Activated CD4-positive, alpha-beta T cell treated with anti-CD3 and anti-CD28 coated beads for 36 hours (primary cell): ENCODE measurements at regions of chr5 and their contacts with region 1.

Region 1: DNA sequence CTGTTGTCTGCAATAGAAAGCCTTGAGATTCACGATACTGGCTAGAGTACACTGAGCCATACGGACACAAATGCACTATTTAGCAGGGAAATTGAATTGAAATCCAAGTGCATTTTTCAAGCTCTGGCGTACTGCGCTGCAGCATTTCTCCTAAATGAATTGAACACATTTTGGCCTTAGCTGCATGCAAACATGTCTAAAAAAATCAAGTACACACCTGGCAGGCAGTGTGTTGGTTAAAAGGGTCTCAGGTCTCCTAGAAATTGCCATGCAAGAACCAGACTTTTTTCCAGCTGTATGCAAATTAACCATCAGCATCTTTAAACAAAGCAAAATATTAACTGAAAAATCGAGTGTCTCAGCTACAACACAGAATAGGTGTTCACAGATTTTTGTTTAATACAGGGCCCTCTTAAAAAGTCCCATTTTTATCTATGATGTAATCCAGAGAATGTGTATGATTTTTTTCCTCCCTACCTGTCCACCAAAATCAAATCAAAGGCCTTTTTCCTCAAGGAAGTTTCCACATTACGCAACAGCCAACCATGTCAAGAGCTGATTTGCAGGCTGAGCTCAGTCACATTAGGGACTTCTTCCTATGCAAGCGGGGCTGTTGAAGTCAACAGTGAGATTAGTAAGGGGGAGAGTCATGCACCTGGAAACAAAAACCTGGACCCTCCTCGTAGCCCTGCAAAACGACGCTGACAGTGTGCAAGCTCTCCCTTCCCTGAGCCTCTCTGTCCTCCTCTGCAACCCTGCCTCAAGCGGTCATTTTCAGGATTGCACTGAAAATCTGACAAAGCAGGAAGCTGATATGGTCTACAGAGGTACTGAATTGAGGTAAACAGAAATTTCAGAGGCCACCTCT is 14.1 kb upstream of the SFXN1 start:
- DNase-seq: peak; percentile 84
- ATAC-seq: peak; percentile 98
- H3K4me3 Mint-ChIP-seq: no peak overlapping the region
- H3K27ac Mint-ChIP-seq: peak overlapping the region; percentile 34
- H3K4me1 Mint-ChIP-seq: peaks cover 12% of the 10 kb centered on the region
- H3K27me3 Mint-ChIP-seq: peaks cover 6% of the 10 kb centered on the region

Region 2: GRCh38 chr5:174951146-174951780 is 513.0 kb before region 1 on chr5:
- CTCF ChIA-PET with region 1: interaction called, 4 read pairs
- POLR2A ChIA-PET with region 1: no interaction called
- intact Hi-C with region 1: loop called in 1 of 2 experiments (anchors 5 kb)
- DNase-seq: peak; percentile 74
- ATAC-seq: peak; percentile 74
- H3K4me3 Mint-ChIP-seq: no peak overlapping the region
- H3K27ac Mint-ChIP-seq: no peak overlapping the region
- H3K4me1 Mint-ChIP-seq: no peaks in the 10 kb centered on the region
- H3K27me3 Mint-ChIP-seq: peaks cover 10% of the 10 kb centered on the region

Region 3: DNA sequence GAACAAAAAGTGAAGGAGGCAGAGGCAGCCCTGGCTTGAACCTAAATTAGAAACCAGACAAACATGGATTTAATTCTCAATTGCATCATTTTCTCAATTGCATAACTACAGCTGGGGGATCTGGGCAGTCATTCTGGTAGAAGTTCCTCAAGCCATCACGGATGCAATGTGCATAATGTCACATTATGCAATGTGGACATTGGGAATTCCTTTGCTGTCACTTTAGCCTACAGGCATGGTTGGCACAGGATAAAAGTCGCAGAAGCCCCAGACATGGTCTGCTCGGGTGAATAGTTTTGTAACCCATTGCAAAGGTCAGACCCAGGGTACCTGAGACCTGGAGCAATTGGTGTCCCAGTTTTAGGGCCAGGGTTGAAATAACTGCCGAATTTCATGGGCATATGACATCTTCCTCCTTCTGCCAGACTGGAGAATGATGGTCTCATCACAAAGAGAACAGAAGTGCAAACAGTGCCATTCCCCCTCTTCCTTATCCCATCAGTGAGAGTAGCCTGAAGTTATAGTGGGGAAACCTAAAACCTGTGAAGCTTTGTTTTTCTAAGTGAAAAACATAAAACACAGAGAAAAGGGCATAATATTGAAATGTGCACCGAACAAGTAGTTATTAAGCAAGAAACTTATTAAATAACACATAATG is 449.2 kb before region 1 on chr5:
- CTCF ChIA-PET with region 1: no interaction called
- POLR2A ChIA-PET with region 1: no interaction called
- intact Hi-C with region 1: no loop called
- DNase-seq: no peak
- ATAC-seq: no peak
- H3K4me3 Mint-ChIP-seq: no peak overlapping the region
- H3K27ac Mint-ChIP-seq: no peak overlapping the region
- H3K4me1 Mint-ChIP-seq: no peaks in the 10 kb centered on the region
- H3K27me3 Mint-ChIP-seq: peaks cover 4% of the 10 kb centered on the region

Region 4: GRCh38 chr5:175478384-175479124 is 14.2 kb after region 1 on chr5 and contains the start of gene SFXN1:
- CTCF ChIA-PET with region 1: interaction called, 32 read pairs
- POLR2A ChIA-PET with region 1: interaction called, 8 read pairs
- intact Hi-C with region 1: no loop called
- DNase-seq: peak; percentile 90
- ATAC-seq: peak; percentile 79
- H3K4me3 Mint-ChIP-seq: peak within 1 kb of the TSS; percentile 97
- H3K27ac Mint-ChIP-seq: peak within 1 kb of the TSS; percentile 99
- H3K4me1 Mint-ChIP-seq: peaks cover 47% of the 10 kb centered on the region
- H3K27me3 Mint-ChIP-seq: peaks cover 3% of the 10 kb centered on the region
- total RNA-seq, gene SFXN1: 322 to 433 TPM